Stomach (tissue), 19 donors: ENCODE measurements at regions of chr5 and their contacts with region 1.

Region 1: GRCh38 chr5:16791036-16791705 is 144.9 kb downstream of the MYO10 start:
- DNase-seq: peak in 1 of 2 donors; percentile 83
- H3K4me3 ChIP-seq: no peak overlapping the region
- H3K27ac ChIP-seq: no peak overlapping the region
- H3K4me1 ChIP-seq: peaks cover 7 to 44% (median 18%) of the 10 kb centered on the region in 4 donors
- H3K27me3 ChIP-seq: no peaks in the 10 kb centered on the region
- CTCF ChIP-seq: peak in 5 of 7 experiments; percentile 15 to 75 (median 68)
- EP300 ChIP-seq: no peak
- POLR2A ChIP-seq: no peak

Region 2: DNA sequence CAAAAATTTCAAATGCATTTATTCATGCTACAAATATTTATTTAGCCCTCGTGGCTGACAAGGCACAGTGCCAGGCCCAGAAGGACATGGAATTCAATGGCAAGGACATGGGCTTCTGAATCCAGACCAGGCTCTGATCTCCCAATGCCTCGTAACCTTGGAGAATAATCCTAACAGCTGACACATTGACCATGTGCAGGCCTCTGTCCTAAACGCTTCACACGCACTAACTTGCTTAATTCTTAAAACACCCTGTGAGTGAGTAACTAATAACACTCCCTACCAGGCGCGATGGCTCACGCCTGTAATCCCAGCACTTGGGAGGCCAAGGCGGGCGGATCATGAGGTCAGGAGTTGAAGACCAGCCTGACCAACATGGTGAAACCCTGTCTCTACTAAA is 111.7 kb after region 1 on chr5:
- intact Hi-C with region 1: no loop called
- DNase-seq: peak; percentile 56 to 77
- H3K4me3 ChIP-seq: no peak overlapping the region
- H3K27ac ChIP-seq: peak overlapping the region in 4 of 5 donors; percentile 46 to 86 (median 66)
- H3K4me1 ChIP-seq: peaks cover 33 to 83% (median 52%) of the 10 kb centered on the region in 4 donors
- H3K27me3 ChIP-seq: no peaks in the 10 kb centered on the region
- CTCF ChIP-seq: no peak
- EP300 ChIP-seq: peak; percentile 81
- POLR2A ChIP-seq: no peak

Region 3: GRCh38 chr5:17189381-17190036 is 398.3 kb after region 1 on chr5:
- intact Hi-C with region 1: loop called (anchors 5 kb)
- DNase-seq: peak; percentile 87 to 90
- H3K4me3 ChIP-seq: no peak overlapping the region
- H3K27ac ChIP-seq: peak overlapping the region in 4 of 5 donors; percentile 3 to 56 (median 18)
- H3K4me1 ChIP-seq: peaks cover 8 to 49% (median 22%) of the 10 kb centered on the region in 4 donors
- H3K27me3 ChIP-seq: no peaks in the 10 kb centered on the region
- CTCF ChIP-seq: peak in 5 of 7 experiments; percentile 57 to 87 (median 79)
- EP300 ChIP-seq: no peak
- POLR2A ChIP-seq: no peak